ENCODE measurements at regions of chr1 and their contacts with region 1.

Region 1: DNA sequence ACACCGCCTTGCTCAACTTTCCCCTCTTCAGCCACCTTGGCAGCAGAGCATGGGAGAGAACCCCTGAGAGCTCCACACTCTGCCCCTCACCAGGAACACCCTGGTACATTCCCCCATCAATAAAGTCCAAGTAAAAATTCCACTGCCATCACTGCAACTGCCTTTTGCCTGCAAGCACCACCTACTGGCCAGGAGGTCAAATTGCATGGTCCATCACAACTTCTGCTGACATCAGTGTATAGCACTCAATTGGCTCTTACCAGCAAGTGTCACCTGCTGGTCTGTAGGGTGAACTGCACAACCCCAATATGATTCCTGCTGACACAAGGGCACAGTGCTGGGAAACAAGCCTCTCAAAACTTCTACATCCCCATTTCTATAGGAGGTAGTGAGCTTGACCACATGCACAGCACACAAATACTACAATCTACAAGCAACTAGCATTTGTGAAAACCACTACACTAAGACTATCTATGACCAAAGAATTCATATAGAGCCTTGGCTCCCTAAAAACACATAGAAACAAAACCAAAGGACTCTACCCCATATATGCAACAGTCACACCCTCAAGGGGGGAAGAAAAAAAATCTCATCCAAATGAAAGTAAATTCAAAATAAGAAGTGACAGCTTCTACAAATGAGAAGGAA is 69.2 kb downstream of the FASLG start:
- DNase-seq: peak; percentile 74
- ATAC-seq: peak; percentile 100
- H3K4me3 Mint-ChIP-seq: no peak overlapping the region
- H3K27ac Mint-ChIP-seq: no peak overlapping the region
- H3K4me1 Mint-ChIP-seq: peaks cover 17% of the 10 kb centered on the region
- H3K27me3 Mint-ChIP-seq: peaks cover 6% of the 10 kb centered on the region
- CTCF ChIP-seq: peak; percentile 97

Region 2: DNA sequence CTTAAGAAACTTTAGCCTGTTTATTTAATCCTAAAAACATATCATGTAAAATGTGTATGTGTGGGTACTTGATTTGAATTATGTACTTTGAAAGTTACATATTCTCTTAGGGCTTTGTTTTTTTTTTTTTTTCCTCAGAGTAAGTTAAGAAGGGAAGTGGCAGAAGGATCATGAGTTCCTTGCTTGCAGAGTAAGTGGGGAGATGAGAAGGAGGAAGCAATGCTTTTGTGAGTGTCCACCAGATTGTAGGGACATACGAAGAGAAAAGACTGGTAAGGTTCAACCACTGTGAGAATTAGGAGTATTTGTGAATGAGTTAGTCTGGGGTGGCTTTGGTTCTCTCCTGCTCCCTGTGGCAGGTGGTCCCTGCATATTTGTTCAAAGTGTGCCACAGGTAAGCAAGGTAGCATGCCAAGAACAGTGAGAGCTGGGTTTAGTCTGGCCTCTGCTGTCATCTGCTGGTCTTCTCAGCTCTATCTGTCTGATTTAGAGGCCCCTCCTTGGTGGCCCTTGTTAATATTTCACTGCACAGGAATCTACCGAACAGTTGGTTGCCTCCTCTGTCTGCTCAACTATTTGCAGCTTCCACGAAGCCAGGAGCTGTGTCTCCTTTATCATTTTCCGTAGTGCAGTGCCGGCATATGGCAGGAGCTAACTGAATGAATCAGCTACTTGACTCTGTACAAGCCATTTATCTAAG is 877.3 kb before region 1 on chr1:
- CTCF ChIA-PET with region 1: no interaction called
- POLR2A ChIA-PET with region 1: no interaction called
- intact Hi-C with region 1: no loop called
- DNase-seq: no peak
- ATAC-seq: no peak
- H3K4me3 Mint-ChIP-seq: no peak overlapping the region
- H3K27ac Mint-ChIP-seq: no peak overlapping the region
- H3K4me1 Mint-ChIP-seq: no peaks in the 10 kb centered on the region
- H3K27me3 Mint-ChIP-seq: peaks cover 3% of the 10 kb centered on the region
- CTCF ChIP-seq: no peak

Region 3: DNA sequence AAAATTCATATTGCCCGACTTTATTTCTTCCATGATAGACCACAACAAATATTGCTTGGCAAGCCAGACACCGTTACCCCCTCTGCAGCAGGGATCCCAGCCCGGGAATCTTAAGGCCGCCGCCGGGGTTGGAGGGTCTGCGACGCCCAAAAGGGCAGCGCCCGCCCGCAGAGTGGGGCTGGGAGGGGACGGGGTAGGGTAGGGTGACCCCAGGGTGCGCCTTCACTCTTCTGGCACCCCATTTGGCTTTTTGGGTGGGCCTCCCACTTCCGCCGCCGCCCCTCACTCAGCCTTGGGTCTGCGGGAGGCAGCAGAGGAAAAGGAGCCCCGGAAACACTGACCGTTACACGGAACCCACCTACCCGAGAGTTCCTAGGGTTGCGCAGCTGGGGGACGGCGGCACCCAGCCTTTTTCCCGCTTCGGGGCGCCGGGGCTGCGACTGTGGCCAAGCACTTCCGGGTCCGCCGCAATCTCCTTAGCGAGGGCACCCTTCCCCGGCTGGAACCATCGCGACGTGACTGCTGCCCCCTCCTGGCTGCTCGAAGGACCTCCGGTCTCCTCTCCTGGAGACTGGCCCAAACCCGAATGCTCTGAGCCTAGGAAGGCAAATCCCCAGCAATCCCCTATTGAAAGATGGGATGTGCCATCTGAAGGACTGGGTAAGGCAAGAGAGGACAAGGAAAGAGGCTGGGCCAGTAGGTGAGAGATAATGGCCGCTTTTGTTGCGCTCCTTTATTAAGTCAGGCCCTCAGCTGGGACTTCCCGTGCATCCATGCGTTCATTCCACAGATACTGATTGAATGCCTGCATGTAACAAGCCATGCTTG is 284.2 kb before region 1 on chr1 and contains the start of gene PIGC:
- CTCF ChIA-PET with region 1: interaction called, 16 read pairs
- POLR2A ChIA-PET with region 1: no interaction called
- intact Hi-C with region 1: no loop called
- DNase-seq: peak; percentile 94
- ATAC-seq: peak; percentile 99
- H3K4me3 Mint-ChIP-seq: peak within 1 kb of the TSS; percentile 87
- H3K27ac Mint-ChIP-seq: peak within 1 kb of the TSS; percentile 92
- H3K4me1 Mint-ChIP-seq: peaks cover 35% of the 10 kb centered on the region
- H3K27me3 Mint-ChIP-seq: no peaks in the 10 kb centered on the region
- CTCF ChIP-seq: peak; percentile 85
- total RNA-seq, gene PIGC: 17.8 to 19.5 TPM

Region 4: GRCh38 chr1:172544481-172545104 is 183.5 kb before region 1 on chr1:
- CTCF ChIA-PET with region 1: interaction called, 11 read pairs
- POLR2A ChIA-PET with region 1: no interaction called
- intact Hi-C with region 1: loop called (anchors 10 kb)
- DNase-seq: no peak
- ATAC-seq: peak; percentile 39
- H3K4me3 Mint-ChIP-seq: no peak overlapping the region
- H3K27ac Mint-ChIP-seq: no peak overlapping the region
- H3K4me1 Mint-ChIP-seq: peaks cover 39% of the 10 kb centered on the region
- H3K27me3 Mint-ChIP-seq: no peaks in the 10 kb centered on the region
- CTCF ChIP-seq: no peak

Region 5: DNA sequence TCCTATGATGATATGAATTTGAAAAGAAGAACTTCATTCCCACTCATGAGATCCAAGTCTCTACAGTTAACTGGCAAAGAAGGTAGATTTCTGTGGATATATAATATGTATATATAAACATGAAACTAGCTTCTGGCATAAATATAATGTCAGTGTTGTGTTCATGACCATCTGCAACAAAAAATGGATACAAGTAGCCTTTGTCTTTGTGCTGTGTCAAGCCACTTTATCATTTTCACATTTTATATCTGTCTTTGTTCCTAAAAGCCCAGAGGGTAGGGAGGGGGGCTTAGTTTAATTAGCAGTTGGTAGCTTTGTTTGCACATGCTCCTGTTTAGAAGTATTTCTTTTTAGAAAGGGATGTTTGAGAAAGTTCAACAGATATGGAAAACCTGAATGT is 125.4 kb before region 1 on chr1:
- CTCF ChIA-PET with region 1: interaction called, 122 read pairs
- POLR2A ChIA-PET with region 1: no interaction called
- intact Hi-C with region 1: no loop called
- DNase-seq: no peak
- ATAC-seq: no peak
- H3K4me3 Mint-ChIP-seq: no peak overlapping the region
- H3K27ac Mint-ChIP-seq: no peak overlapping the region
- H3K4me1 Mint-ChIP-seq: peaks cover 2% of the 10 kb centered on the region
- H3K27me3 Mint-ChIP-seq: no peaks in the 10 kb centered on the region
- CTCF ChIP-seq: no peak

Region 6: DNA sequence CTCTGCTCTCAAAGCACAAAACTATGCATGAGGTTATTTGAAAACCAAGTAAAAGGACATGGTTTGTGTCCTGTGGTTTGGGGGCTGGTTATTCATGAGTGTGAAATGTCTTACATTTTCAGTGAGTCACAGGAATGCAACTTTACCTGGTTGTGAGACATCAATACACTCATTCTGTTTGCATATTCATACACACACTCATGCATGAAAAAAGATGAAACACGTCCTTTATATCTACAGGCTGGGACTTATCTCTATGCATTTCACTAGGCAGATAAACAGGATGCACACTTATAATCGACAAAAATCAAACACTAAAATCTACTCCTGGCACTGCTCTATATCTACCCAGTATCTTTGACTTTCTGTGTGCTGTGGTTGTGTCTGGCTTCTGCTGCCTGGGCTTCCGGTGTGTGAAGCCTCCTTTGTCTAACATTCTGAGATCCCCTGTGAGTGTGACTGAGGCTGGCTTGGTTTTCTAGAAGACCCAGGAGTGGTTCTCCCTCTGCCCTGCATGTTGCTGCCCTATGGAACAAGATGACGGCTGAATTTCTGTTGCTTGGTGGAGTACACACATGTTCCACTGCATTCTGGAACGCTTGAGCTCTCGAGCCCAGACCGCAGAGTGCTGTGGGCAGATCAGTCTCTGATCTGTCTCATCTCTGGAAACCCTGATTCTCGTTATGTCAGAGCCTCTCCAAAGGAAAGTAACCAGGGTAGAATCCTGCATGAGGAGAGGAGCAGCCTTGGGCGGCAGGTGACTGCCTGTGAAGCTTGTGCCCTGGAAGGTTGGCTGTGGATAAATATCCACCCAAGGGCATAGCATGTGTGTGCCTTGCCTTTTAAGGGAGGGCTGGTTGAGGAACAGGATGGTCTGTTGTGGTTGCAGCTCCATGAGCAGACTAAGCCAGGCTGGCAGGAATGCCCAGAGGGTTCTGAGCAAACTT is 88.9 kb before region 1 on chr1:
- CTCF ChIA-PET with region 1: interaction called, 25 read pairs
- POLR2A ChIA-PET with region 1: interaction called, 3 read pairs
- intact Hi-C with region 1: no loop called
- DNase-seq: peak; percentile 94
- ATAC-seq: peak; percentile 75
- H3K4me3 Mint-ChIP-seq: peak overlapping the region; percentile 49
- H3K27ac Mint-ChIP-seq: peak overlapping the region; percentile 98
- H3K4me1 Mint-ChIP-seq: peaks cover 72% of the 10 kb centered on the region
- H3K27me3 Mint-ChIP-seq: no peaks in the 10 kb centered on the region
- CTCF ChIP-seq: no peak

Region 7: GRCh38 chr1:172671591-172671990 is 56.5 kb before region 1 on chr1:
- CTCF ChIA-PET with region 1: interaction called, 11 read pairs
- POLR2A ChIA-PET with region 1: interaction called, 3 read pairs
- intact Hi-C with region 1: no loop called
- DNase-seq: no peak
- ATAC-seq: no peak
- H3K4me3 Mint-ChIP-seq: no peak overlapping the region
- H3K27ac Mint-ChIP-seq: no peak overlapping the region
- H3K4me1 Mint-ChIP-seq: peaks cover 84% of the 10 kb centered on the region
- H3K27me3 Mint-ChIP-seq: peaks cover 14% of the 10 kb centered on the region
- CTCF ChIP-seq: no peak

Measured in activated CD8-positive, alpha-beta T cell treated with anti-CD3 and anti-CD28 coated beads for 36 hours (primary cell).